ENCODE measurements at regions of chr16 and their contacts with region 1.

Region 1: DNA sequence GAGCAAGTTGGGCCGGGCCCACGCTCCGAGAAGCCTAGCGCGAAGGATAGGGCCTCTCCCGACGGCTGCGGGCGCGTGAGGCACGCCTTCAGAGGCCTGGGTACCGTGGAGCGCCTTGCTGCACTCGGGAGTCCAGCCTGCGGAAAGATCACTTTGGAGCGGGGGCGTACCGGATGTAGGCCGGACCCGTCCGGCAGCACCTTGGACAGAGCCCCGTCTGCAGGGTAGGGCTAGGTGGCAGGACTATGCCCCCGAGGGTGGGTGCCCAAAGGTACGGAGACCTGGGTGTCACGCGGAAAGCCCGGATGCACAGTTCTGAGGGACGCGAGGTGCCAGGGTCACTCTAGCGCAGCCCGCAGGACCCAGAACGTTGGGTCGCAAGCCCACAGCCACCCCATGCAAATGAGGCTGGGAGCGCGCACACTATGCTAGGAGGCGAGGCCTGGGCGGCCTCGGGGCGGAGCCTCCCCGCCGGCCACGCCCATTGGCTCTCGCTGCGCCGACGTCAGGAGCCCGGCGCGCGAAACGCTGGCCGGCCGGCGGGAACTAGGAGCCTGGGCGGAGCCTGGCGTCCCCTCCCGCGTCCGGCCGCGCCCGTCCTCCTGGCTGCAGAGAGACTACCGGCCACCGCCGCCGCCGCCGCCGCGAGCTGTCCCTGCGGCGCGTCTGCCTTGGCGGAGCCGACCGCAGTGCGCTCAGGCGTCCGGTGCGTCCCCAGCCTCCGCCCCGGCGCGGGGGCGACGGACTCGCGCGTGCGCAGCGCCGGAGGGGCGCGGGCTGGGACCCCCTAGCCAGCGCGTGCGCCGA is at the start of gene PAQR4:
- DNase-seq: peak; percentile 92
- ATAC-seq: peak; percentile 72
- H3K4me3 ChIP-seq: peak within 1 kb of the TSS; percentile 85
- H3K27ac ChIP-seq: peak within 1 kb of the TSS; percentile 43
- H3K4me1 ChIP-seq: peaks cover 22% of the 10 kb centered on the region; the same call in 1 of the 2 replicates
- H3K27me3 ChIP-seq: no peaks in the 10 kb centered on the region
- CTCF ChIP-seq: no peak
- total RNA-seq, gene PAQR4: 37.9 and 45.0 TPM in 2 replicates

Region 2: DNA sequence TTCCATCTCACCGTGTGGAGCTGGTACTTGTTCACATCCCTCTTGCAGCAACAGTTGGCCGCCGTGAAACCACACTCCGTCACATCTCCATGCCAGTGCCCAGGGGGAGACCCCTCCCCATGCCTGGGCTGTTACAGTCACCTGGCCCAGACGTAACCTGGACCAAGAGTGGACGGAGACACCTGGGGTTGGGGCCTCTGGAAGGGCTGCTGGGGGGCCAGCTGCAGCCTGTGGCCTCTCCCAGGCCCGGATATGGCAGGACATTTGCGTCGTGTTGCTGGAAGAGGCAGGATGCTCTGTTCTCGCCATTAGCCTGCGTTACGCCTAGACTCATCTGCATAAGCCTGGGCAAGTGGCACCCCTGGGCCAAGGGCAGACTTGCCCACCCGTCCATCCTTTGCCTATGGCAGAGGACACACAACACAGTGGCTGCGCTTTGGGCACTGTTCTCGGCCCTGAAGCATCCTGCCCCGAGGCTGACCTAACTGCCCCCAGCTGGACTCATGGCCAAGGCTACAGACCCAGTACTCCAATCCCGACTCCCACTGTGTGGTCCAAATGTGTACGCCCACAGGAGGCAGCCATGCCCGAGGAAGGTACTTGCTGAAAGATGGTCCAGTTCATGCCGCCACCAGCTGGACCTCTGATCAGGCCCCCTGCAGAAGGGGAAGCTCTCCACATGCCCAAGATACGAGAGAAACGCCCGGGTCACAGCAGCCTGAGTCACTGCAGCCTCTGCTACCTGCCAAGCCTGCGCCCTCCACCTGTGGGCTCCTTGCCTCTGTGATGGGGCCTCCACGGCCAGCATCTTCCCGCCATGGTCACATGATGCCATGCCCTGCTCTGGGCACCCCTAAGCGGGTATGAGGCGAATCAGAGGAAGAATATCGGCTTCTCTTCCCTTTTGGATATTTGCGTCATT is 18.9 kb before region 1 on chr16:
- CTCF ChIA-PET with region 1: interaction called, 15 read pairs
- POLR2A ChIA-PET with region 1: no interaction called
- intact Hi-C with region 1: no loop called
- DNase-seq: no peak
- ATAC-seq: no peak
- H3K4me3 ChIP-seq: no peak overlapping the region
- H3K27ac ChIP-seq: no peak overlapping the region
- H3K4me1 ChIP-seq: no peaks in the 10 kb centered on the region
- H3K27me3 ChIP-seq: no peaks in the 10 kb centered on the region
- CTCF ChIP-seq: no peak

Measured in PC-3 (cell line).